B cell (primary cell): ENCODE measurements at regions of chr6 and their contacts with region 1.

Region 1: DNA sequence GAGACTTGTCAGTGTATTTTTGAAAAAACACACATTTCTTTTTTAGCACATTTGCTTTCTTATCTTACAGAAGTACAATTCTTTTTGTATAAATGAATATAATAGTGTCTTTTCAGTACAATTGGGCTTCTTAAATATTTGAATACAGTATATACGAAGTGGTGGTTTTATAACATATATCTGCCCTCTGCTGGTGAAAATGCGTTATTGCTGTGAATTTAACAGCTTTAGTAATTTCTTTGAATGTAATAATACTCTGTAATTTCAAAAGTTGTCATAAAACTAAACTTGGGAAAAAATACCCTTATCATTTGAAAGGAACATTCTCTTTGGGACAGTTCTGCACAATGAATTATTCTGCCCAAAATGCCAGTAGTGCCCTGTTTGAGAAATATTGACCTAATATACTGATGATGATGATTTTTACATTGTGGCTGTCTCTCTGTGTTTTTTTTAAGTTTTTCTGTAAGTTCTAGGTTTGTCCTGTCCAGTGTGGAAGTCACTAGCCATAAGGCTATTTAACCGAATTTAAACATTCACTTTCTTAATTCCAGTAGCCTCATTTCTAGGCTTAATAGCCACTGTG is 19.0 kb downstream of the SMAP1 start:
- DNase-seq: peak; percentile 56
- ATAC-seq: no peak
- H3K4me3 ChIP-seq: no peak overlapping the region
- H3K4me3 Mint-ChIP-seq: no peak overlapping the region
- H3K27ac ChIP-seq: no peak overlapping the region
- H3K27ac Mint-ChIP-seq: no peak overlapping the region
- H3K4me1 ChIP-seq: no peaks in the 10 kb centered on the region
- H3K4me1 Mint-ChIP-seq: peaks cover 30% of the 10 kb centered on the region
- H3K27me3 ChIP-seq: no peaks in the 10 kb centered on the region
- H3K27me3 Mint-ChIP-seq: no peaks in the 10 kb centered on the region
- CTCF ChIP-seq: peak; percentile 92

Region 2: DNA sequence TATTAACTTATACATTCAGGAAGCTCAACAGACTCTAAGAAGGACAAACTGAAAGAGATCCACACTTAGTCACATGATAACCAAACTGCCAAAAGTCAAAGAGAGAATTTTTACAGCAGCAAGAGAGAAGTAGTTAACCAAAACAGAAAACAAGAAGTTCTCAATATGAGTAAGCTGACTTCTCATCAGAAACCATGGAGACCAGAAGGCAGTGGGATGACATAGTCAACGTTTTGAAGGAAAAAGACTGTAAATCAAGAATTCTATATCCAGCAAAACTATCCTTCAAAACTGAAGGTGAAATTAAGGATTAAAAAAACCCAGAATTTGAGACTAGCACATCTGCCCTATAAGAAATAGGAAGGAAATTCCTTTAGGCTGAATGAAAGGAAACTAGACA is 759.9 kb before region 1 on chr6:
- CTCF ChIA-PET with region 1: no interaction called
- POLR2A ChIA-PET with region 1: no interaction called
- intact Hi-C with region 1: no loop called
- DNase-seq: no peak
- ATAC-seq: no peak
- H3K4me3 ChIP-seq: no peak overlapping the region
- H3K4me3 Mint-ChIP-seq: no peak overlapping the region
- H3K27ac ChIP-seq: no peak overlapping the region
- H3K27ac Mint-ChIP-seq: no peak overlapping the region
- H3K4me1 ChIP-seq: no peaks in the 10 kb centered on the region
- H3K4me1 Mint-ChIP-seq: no peaks in the 10 kb centered on the region
- H3K27me3 ChIP-seq: no peaks in the 10 kb centered on the region
- H3K27me3 Mint-ChIP-seq: no peaks in the 10 kb centered on the region
- CTCF ChIP-seq: no peak

Region 3: GRCh38 chr6:70221025-70221714 is 465.5 kb before region 1 on chr6:
- CTCF ChIA-PET with region 1: interaction called, 19 read pairs
- POLR2A ChIA-PET with region 1: no interaction called
- intact Hi-C with region 1: no loop called
- DNase-seq: peak; percentile 42
- ATAC-seq: peak; percentile 39
- H3K4me3 ChIP-seq: no peak overlapping the region
- H3K4me3 Mint-ChIP-seq: no peak overlapping the region
- H3K27ac ChIP-seq: no peak overlapping the region
- H3K27ac Mint-ChIP-seq: no peak overlapping the region
- H3K4me1 ChIP-seq: peaks cover 6 to 9% of the 10 kb centered on the region in 2 donors
- H3K4me1 Mint-ChIP-seq: peaks cover 8% of the 10 kb centered on the region
- H3K27me3 ChIP-seq: no peaks in the 10 kb centered on the region
- H3K27me3 Mint-ChIP-seq: peaks cover 7% of the 10 kb centered on the region
- CTCF ChIP-seq: peak; percentile 94

Region 4: DNA sequence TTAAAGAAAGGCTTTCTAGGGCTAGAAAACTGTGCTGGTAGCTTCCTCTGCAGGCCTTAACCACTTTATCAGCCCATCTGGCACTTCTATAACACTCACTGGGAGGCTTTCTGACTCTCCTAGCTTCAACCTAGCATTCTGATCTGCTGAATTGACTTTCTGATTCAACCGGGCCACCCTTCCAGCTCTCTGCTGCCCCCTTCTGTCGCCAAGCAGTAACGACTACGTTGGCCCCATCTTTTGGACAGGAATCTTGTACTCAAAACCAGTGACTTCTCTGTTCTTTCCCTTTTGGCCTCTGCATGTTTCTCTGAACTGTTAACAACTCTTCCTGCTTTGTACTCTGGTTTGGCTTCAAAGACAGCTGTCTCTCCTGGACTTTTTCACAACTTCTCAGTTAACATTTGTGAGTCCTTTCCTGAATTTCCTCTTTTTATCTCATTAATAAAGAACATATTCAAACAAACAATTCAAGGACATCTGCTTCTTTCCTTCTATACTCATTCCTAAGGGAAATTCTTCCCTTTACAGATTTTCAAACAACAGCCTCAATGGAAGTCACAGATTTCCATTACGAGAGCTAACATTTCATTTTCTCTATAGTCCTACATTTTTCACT is 317.2 kb before region 1 on chr6:
- CTCF ChIA-PET with region 1: interaction called, 25 read pairs
- POLR2A ChIA-PET with region 1: no interaction called
- intact Hi-C with region 1: loop called (anchors 1 kb)
- DNase-seq: peak; percentile 73
- ATAC-seq: peak; percentile 78
- H3K4me3 ChIP-seq: no peak overlapping the region
- H3K4me3 Mint-ChIP-seq: no peak overlapping the region
- H3K27ac ChIP-seq: no peak overlapping the region
- H3K27ac Mint-ChIP-seq: no peak overlapping the region
- H3K4me1 ChIP-seq: no peaks in the 10 kb centered on the region
- H3K4me1 Mint-ChIP-seq: peaks cover 4% of the 10 kb centered on the region
- H3K27me3 ChIP-seq: peaks cover 0 to 2% (median 0%) of the 10 kb centered on the region in 4 experiments
- H3K27me3 Mint-ChIP-seq: peaks cover 32% of the 10 kb centered on the region
- CTCF ChIP-seq: peak; percentile 84

Region 5: GRCh38 chr6:70520575-70520974 is 166.1 kb before region 1 on chr6:
- CTCF ChIA-PET with region 1: interaction called, 73 read pairs
- POLR2A ChIA-PET with region 1: interaction called, 6 read pairs
- intact Hi-C with region 1: loop called (anchors 1 kb)
- DNase-seq: peak; percentile 22
- ATAC-seq: no peak
- H3K4me3 ChIP-seq: no peak overlapping the region
- H3K4me3 Mint-ChIP-seq: no peak overlapping the region
- H3K27ac ChIP-seq: no peak overlapping the region
- H3K27ac Mint-ChIP-seq: no peak overlapping the region
- H3K4me1 ChIP-seq: no peaks in the 10 kb centered on the region
- H3K4me1 Mint-ChIP-seq: no peaks in the 10 kb centered on the region
- H3K27me3 ChIP-seq: no peaks in the 10 kb centered on the region
- H3K27me3 Mint-ChIP-seq: no peaks in the 10 kb centered on the region
- CTCF ChIP-seq: peak; percentile 64

Region 6: GRCh38 chr6:70638468-70638867 is 48.2 kb before region 1 on chr6:
- CTCF ChIA-PET with region 1: no interaction called
- POLR2A ChIA-PET with region 1: no interaction called
- intact Hi-C with region 1: no loop called
- DNase-seq: no peak
- ATAC-seq: no peak
- H3K4me3 ChIP-seq: no peak overlapping the region
- H3K4me3 Mint-ChIP-seq: no peak overlapping the region
- H3K27ac ChIP-seq: no peak overlapping the region
- H3K27ac Mint-ChIP-seq: no peak overlapping the region
- H3K4me1 ChIP-seq: no peaks in the 10 kb centered on the region
- H3K4me1 Mint-ChIP-seq: no peaks in the 10 kb centered on the region
- H3K27me3 ChIP-seq: peaks cover 0 to 3% (median 1%) of the 10 kb centered on the region in 4 experiments
- H3K27me3 Mint-ChIP-seq: peaks cover 3% of the 10 kb centered on the region
- CTCF ChIP-seq: no peak

Region 7: GRCh38 chr6:70667711-70668498 is 18.7 kb before region 1 on chr6 and contains the start of gene SMAP1:
- CTCF ChIA-PET with region 1: interaction called, 29 read pairs
- POLR2A ChIA-PET with region 1: no interaction called
- intact Hi-C with region 1: loop called (anchors 2 kb)
- DNase-seq: peak; percentile 95
- ATAC-seq: peak; percentile 97
- H3K4me3 ChIP-seq: peak within 1 kb of the TSS; percentile 69 to 92 (median 82)
- H3K4me3 Mint-ChIP-seq: peak within 1 kb of the TSS; percentile 90
- H3K27ac ChIP-seq: peak within 1 kb of the TSS; percentile 60 to 83
- H3K27ac Mint-ChIP-seq: peak within 1 kb of the TSS; percentile 93
- H3K4me1 ChIP-seq: peaks cover 17 to 23% of the 10 kb centered on the region in 2 donors
- H3K4me1 Mint-ChIP-seq: peaks cover 37% of the 10 kb centered on the region
- H3K27me3 ChIP-seq: no peaks in the 10 kb centered on the region
- H3K27me3 Mint-ChIP-seq: peaks cover 6% of the 10 kb centered on the region
- CTCF ChIP-seq: no peak
- total RNA-seq, gene SMAP1: 19.7 and 21.7 TPM in 2 replicates

Region 8: GRCh38 chr6:70738028-70738427 is 51.4 kb after region 1 on chr6:
- CTCF ChIA-PET with region 1: no interaction called
- POLR2A ChIA-PET with region 1: no interaction called
- intact Hi-C with region 1: no loop called
- DNase-seq: no peak
- ATAC-seq: no peak
- H3K4me3 ChIP-seq: no peak overlapping the region
- H3K4me3 Mint-ChIP-seq: no peak overlapping the region
- H3K27ac ChIP-seq: no peak overlapping the region
- H3K27ac Mint-ChIP-seq: no peak overlapping the region
- H3K4me1 ChIP-seq: no peaks in the 10 kb centered on the region
- H3K4me1 Mint-ChIP-seq: no peaks in the 10 kb centered on the region
- H3K27me3 ChIP-seq: no peaks in the 10 kb centered on the region
- H3K27me3 Mint-ChIP-seq: no peaks in the 10 kb centered on the region
- CTCF ChIP-seq: no peak